Naive thymus-derived CD4-positive, alpha-beta T cell (primary cell): ENCODE measurements at regions of chr9 and their contacts with region 1.

Region 1: DNA sequence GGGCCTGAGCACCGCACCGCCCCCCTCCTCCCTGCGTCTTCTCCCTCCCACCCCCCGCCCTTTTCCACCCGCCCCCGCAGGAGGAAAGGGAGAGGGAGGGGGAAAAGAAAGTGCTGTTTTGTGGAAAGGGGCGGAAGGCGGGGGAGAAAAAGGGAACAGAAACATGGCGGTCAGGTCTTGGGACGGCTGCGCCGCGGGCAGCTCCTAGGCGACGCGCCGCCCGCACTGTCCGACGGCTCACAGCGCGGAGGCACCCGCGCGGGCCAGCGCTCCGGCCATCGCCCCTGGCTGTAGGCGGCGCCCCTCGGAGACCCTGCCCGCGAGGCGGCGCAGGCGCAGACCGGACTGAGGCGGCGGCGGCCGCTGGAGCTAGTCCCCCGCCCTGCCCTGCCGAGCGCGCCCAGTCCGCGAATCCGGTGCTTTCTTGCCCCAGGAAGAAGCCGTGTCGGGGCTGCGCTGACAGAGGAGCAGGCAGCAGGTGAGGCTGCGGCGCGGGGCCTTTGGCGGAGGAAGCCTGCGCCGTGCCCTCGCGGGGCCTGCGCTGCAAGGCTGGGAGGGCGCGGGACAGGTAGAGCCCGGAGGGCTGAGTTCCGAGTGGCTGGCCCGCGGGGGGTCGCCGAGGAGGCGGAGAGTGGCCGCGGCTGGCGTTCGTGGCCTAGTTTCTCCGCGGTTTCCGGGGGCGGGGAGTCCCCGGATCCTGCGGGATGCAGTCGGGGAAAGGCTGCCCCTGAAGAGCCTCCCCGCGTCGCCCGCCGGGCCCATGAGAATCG is at the start of gene DENND4C:
- DNase-seq: peak; percentile 60 to 86 (median 81)
- ATAC-seq: peak; percentile 84
- H3K4me3 ChIP-seq: peak within 1 kb of the TSS; percentile 61
- H3K4me3 Mint-ChIP-seq: peak within 1 kb of the TSS in 3 of 10 donors; percentile 81 to 84 (median 84)
- H3K27ac ChIP-seq: peak within 1 kb of the TSS; percentile 81
- H3K27ac Mint-ChIP-seq: peak within 1 kb of the TSS in 6 of 9 donors; percentile 65 to 94 (median 88)
- H3K4me1 ChIP-seq: peaks cover 11 to 22% of the 10 kb centered on the region in 2 donors
- H3K4me1 Mint-ChIP-seq: peaks cover 0 to 24% (median 20%) of the 10 kb centered on the region in 7 donors
- H3K27me3 ChIP-seq: no peaks in the 10 kb centered on the region
- H3K27me3 Mint-ChIP-seq: no peaks in the 10 kb centered on the region
- total RNA-seq, gene DENND4C: 43.5 to 77.5 (median 52.0) TPM

Region 2: GRCh38 chr9:18043978-18044377 is 1186.6 kb before region 1 on chr9:
- CTCF ChIA-PET with region 1: no interaction called
- POLR2A ChIA-PET with region 1: no interaction called
- intact Hi-C with region 1: no loop called
- DNase-seq: no peak
- ATAC-seq: no peak
- H3K4me3 ChIP-seq: no peak overlapping the region
- H3K4me3 Mint-ChIP-seq: no peak overlapping the region
- H3K27ac ChIP-seq: no peak overlapping the region
- H3K27ac Mint-ChIP-seq: no peak overlapping the region
- H3K4me1 ChIP-seq: no peaks in the 10 kb centered on the region
- H3K4me1 Mint-ChIP-seq: no peaks in the 10 kb centered on the region
- H3K27me3 ChIP-seq: no peaks in the 10 kb centered on the region
- H3K27me3 Mint-ChIP-seq: no peaks in the 10 kb centered on the region

Region 3: GRCh38 chr9:19048966-19049916 is 181.3 kb before region 1 on chr9 and contains the start of gene RRAGA:
- CTCF ChIA-PET with region 1: no interaction called
- POLR2A ChIA-PET with region 1: interaction called, 14 read pairs
- intact Hi-C with region 1: loop called (anchors 1 kb)
- DNase-seq: peak; percentile 90 to 96 (median 95)
- ATAC-seq: peak; percentile 95
- H3K4me3 ChIP-seq: peak within 1 kb of the TSS; percentile 88
- H3K4me3 Mint-ChIP-seq: peak within 1 kb of the TSS; percentile 92 to 99 (median 95)
- H3K27ac ChIP-seq: peak within 1 kb of the TSS; percentile 85
- H3K27ac Mint-ChIP-seq: peak within 1 kb of the TSS; percentile 97 to 100 (median 98)
- H3K4me1 ChIP-seq: peaks cover 20% of the 10 kb centered on the region in 2 donors
- H3K4me1 Mint-ChIP-seq: peaks cover 6 to 50% (median 42%) of the 10 kb centered on the region in 7 donors
- H3K27me3 ChIP-seq: no peaks in the 10 kb centered on the region
- H3K27me3 Mint-ChIP-seq: peaks cover 0 to 2% (median 0%) of the 10 kb centered on the region in 5 donors
- total RNA-seq, gene RRAGA: 25.9 to 53.6 (median 51.9) TPM

Region 4: DNA sequence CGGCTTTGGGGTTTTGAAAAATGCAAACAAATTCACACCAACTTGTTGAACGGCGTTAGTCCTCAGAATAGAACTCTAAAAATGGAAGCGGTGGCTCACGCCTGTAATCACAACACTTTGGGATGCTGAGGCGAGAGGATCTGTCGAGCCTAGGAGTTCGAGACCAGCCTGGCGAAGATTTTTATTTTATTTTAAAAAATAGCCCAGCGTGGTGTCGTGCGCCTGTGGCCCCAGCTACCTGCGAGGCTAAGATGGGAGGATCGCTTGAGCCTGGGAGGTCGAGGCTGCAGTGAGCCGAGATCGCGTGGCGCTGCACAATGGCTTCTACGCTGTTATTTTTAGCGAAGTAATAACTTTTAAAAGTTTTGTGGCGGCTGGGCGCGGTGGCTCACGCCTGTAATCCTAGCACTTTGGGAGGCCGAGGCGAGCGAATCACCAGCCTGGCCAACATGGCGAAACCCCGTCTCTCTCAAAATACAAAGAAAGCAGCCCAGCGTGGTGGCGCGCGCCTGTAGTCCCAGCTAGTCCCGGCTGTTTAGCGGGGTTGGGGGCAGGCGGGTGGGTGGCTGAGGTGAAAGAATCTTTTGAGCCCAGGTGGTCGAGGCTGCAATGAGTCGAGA is 102.5 kb before region 1 on chr9:
- CTCF ChIA-PET with region 1: no interaction called
- POLR2A ChIA-PET with region 1: interaction called, 11 read pairs
- intact Hi-C with region 1: loop called (anchors 1 kb)
- DNase-seq: peak in 7 of 9 donors; percentile 12 to 44 (median 32)
- ATAC-seq: peak; percentile 44
- H3K4me3 ChIP-seq: peak overlapping the region; percentile 78
- H3K4me3 Mint-ChIP-seq: peak overlapping the region; percentile 80 to 96 (median 93)
- H3K27ac ChIP-seq: peak overlapping the region; percentile 94
- H3K27ac Mint-ChIP-seq: peak overlapping the region; percentile 60 to 97 (median 95)
- H3K4me1 ChIP-seq: peaks cover 24 to 26% of the 10 kb centered on the region in 2 donors
- H3K4me1 Mint-ChIP-seq: peaks cover 18 to 62% (median 48%) of the 10 kb centered on the region in 7 donors
- H3K27me3 ChIP-seq: no peaks in the 10 kb centered on the region
- H3K27me3 Mint-ChIP-seq: no peaks in the 10 kb centered on the region

Region 5: DNA sequence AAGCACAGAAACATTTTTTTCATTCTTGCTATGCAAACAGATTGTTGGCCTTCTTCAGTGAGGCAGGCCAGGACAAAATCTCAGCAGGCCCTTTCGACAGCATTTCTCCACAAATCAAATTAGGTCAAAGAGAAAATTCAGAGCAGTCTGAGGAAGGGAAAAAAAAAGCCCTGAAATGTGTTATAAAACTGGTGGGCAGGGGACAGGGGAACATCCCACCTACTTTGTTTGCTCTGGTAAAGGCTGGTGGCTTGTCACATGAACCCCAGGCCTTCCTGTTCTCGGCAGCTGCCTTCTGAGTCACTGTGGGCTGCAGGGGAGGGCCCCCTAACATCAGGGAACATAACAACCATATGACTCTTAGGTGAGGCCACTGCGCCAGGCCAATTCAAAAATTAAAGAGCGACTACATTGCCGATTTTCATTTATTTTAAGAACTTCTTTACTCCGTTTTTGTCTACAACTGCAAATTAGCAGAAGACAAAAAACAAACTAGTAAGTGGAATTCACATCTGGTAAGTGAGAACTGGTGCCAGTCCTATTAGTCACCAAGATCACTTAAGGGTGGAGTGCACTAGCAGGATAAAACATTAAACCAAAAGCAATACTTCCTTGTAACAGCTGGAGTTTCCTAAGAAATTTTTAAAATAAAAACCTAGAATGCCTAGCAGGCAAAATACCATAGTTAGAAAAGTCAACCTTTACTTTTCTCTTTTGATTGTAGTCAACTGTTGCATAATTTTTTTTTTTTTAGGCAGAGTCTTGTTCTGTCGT is 46.2 kb before region 1 on chr9:
- CTCF ChIA-PET with region 1: no interaction called
- POLR2A ChIA-PET with region 1: interaction called, 10 read pairs
- intact Hi-C with region 1: loop called (anchors 1 kb)
- DNase-seq: peak; percentile 32 to 75 (median 47)
- ATAC-seq: peak; percentile 97
- H3K4me3 ChIP-seq: no peak overlapping the region
- H3K4me3 Mint-ChIP-seq: peak overlapping the region in 9 of 10 donors; percentile 3 to 66 (median 34)
- H3K27ac ChIP-seq: peak overlapping the region; percentile 62
- H3K27ac Mint-ChIP-seq: peak overlapping the region; percentile 83 to 97 (median 93)
- H3K4me1 ChIP-seq: peaks cover 11 to 17% of the 10 kb centered on the region in 2 donors
- H3K4me1 Mint-ChIP-seq: peaks cover 6 to 19% (median 13%) of the 10 kb centered on the region in 7 donors
- H3K27me3 ChIP-seq: no peaks in the 10 kb centered on the region
- H3K27me3 Mint-ChIP-seq: no peaks in the 10 kb centered on the region

Region 6: GRCh38 chr9:19286634-19287200 is 56.2 kb after region 1 on chr9:
- CTCF ChIA-PET with region 1: no interaction called
- POLR2A ChIA-PET with region 1: interaction called, 3 read pairs
- intact Hi-C with region 1: loop called (anchors 2 to 5 kb)
- DNase-seq: no peak
- ATAC-seq: no peak
- H3K4me3 ChIP-seq: no peak overlapping the region
- H3K4me3 Mint-ChIP-seq: no peak overlapping the region
- H3K27ac ChIP-seq: no peak overlapping the region
- H3K27ac Mint-ChIP-seq: no peak overlapping the region
- H3K4me1 ChIP-seq: no peaks in the 10 kb centered on the region
- H3K4me1 Mint-ChIP-seq: peaks cover 7 to 48% (median 35%) of the 10 kb centered on the region in 7 donors
- H3K27me3 ChIP-seq: no peaks in the 10 kb centered on the region
- H3K27me3 Mint-ChIP-seq: no peaks in the 10 kb centered on the region

Region 7: DNA sequence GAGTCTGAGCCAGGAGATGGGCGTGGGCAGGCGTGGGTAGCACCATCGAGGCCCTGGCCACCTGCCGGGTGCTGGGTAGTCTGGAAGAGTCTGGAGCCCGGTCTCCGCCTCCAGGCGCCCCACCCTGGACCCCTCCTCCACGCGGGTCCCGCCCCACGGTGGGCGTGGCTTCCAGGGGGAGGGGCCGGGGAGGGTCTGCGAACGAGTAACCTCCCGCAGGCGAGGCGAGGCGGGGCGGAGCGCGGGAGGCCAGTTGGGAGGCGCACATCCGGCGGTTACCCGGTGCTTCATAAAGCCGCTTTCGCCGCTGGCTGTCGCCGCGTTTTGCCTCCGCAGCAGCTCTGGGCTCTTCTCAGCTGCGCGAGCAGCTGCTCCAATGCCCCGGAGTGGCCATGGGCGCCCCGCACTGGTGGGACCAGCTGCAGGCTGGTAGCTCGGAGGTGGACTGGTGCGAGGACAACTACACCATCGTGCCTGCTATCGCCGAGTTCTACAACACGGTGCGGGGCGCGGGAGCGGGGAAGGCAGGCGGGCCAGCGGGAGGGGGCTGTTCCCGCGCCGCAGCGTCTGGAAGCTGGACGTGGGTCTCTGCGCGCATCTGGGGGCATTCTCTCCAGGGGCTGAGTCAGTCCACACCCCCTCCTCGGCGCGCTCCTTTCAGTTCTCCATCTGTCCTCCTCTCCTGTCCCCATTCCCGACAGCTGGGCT is 178.3 kb after region 1 on chr9 and contains the start of gene ACER2:
- CTCF ChIA-PET with region 1: no interaction called
- POLR2A ChIA-PET with region 1: no interaction called
- intact Hi-C with region 1: loop called (anchors 1 to 2 kb)
- DNase-seq: peak; percentile 91 to 99 (median 95)
- ATAC-seq: peak; percentile 99
- H3K4me3 ChIP-seq: peak within 1 kb of the TSS; percentile 96
- H3K4me3 Mint-ChIP-seq: peak within 1 kb of the TSS; percentile 92 to 99 (median 94)
- H3K27ac ChIP-seq: peak within 1 kb of the TSS; percentile 72
- H3K27ac Mint-ChIP-seq: peak within 1 kb of the TSS; percentile 74 to 94 (median 82)
- H3K4me1 ChIP-seq: peaks cover 0 to 6% of the 10 kb centered on the region in 2 donors
- H3K4me1 Mint-ChIP-seq: peaks cover 8 to 30% (median 19%) of the 10 kb centered on the region in 7 donors
- H3K27me3 ChIP-seq: no peaks in the 10 kb centered on the region
- H3K27me3 Mint-ChIP-seq: peaks cover 0 to 9% (median 0%) of the 10 kb centered on the region in 5 donors
- total RNA-seq, gene ACER2: 2.0 to 5.7 (median 2.8) TPM

Region 8: GRCh38 chr9:21031091-21031807 is 1800.7 kb after region 1 on chr9 and contains the start of gene HACD4:
- CTCF ChIA-PET with region 1: no interaction called
- POLR2A ChIA-PET with region 1: no interaction called
- intact Hi-C with region 1: loop called in 1 of 2 experiments (anchors 5 kb)
- DNase-seq: peak; percentile 53 to 76 (median 73)
- ATAC-seq: peak; percentile 87
- H3K4me3 ChIP-seq: peak within 1 kb of the TSS; percentile 62
- H3K4me3 Mint-ChIP-seq: peak within 1 kb of the TSS in 7 of 10 donors; percentile 65 to 86 (median 76)
- H3K27ac ChIP-seq: peak within 1 kb of the TSS; percentile 78
- H3K27ac Mint-ChIP-seq: peak within 1 kb of the TSS in 7 of 9 donors; percentile 71 to 88 (median 81)
- H3K4me1 ChIP-seq: peaks cover 12 to 16% of the 10 kb centered on the region in 2 donors
- H3K4me1 Mint-ChIP-seq: peaks cover 13 to 42% (median 30%) of the 10 kb centered on the region in 7 donors
- H3K27me3 ChIP-seq: no peaks in the 10 kb centered on the region
- H3K27me3 Mint-ChIP-seq: no peaks in the 10 kb centered on the region
- total RNA-seq, gene HACD4: 9.3 to 15.2 (median 13.6) TPM